HEK293 (cell line): ENCODE measurements at regions of chr11 and their contacts with region 1.

Region 1: GRCh38 chr11:46367244-46367915 is 14.1 kb upstream of the MDK start:
- H3K4me3 ChIP-seq: no peak overlapping the region
- H3K27ac ChIP-seq: no peak overlapping the region
- H3K4me1 ChIP-seq: no peaks in the 10 kb centered on the region
- CTCF ChIP-seq: peak; percentile 67

Region 2: DNA sequence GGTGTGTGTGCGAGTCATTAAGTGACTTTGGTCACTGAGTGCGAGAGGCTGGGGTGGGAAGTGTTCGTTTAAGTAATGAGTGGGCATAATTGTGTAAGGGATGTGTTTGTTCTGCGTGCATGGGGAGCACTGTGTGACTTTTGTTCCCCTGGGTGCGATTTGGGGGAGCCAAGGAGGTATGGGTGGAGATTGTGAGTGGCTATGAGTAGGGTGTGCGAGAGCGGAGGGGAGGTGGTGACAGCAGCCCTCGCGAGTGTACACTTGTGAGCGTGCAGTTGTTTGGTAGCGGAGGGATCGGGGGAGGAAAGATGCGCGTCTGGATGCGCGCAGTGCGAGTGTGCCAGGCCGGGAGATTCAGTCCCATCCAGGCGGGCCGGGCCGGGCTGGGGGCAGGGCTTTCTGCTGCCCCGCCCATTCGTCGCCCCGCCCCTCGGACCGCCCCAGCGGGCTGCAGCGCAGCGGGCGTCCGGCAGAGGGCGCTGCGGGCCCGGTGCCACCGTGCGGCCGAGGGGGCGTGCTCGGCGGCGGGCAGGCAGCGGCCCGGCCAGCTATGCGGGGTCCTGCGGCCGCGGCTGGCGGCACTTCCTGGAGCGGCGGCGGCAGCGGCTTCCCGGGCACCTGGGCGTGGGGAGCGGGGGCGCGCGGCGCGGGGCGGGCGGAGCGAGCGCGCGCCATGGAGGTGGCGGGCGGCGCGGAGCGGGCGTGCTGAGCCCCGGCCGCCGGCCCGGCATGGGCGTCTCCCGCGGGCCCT is 20.3 kb before region 1 on chr11 and contains the start of gene DGKZ:
- CTCF ChIA-PET with region 1: interaction called, 98 read pairs
- POLR2A ChIA-PET with region 1: no interaction called
- H3K4me3 ChIP-seq: peak within 1 kb of the TSS; percentile 85
- H3K27ac ChIP-seq: peak within 1 kb of the TSS; percentile 64; the same call in 1 of the 2 replicates
- H3K4me1 ChIP-seq: no peaks in the 10 kb centered on the region; the same call in 1 of the 2 replicates
- CTCF ChIP-seq: no peak; the same call in 1 of the 2 replicates

Region 3: GRCh38 chr11:46352063-46352841 is 15.1 kb before region 1 on chr11:
- CTCF ChIA-PET with region 1: interaction called, 98 read pairs
- POLR2A ChIA-PET with region 1: no interaction called
- H3K4me3 ChIP-seq: no peak overlapping the region
- H3K27ac ChIP-seq: no peak overlapping the region
- H3K4me1 ChIP-seq: no peaks in the 10 kb centered on the region; the same call in 1 of the 2 replicates
- CTCF ChIP-seq: peak; percentile 70

Region 4: GRCh38 chr11:46601129-46601528 is 233.7 kb after region 1 on chr11:
- CTCF ChIA-PET with region 1: no interaction called
- POLR2A ChIA-PET with region 1: no interaction called
- H3K4me3 ChIP-seq: no peak overlapping the region
- H3K27ac ChIP-seq: no peak overlapping the region
- H3K4me1 ChIP-seq: no peaks in the 10 kb centered on the region
- CTCF ChIP-seq: no peak

Region 5: DNA sequence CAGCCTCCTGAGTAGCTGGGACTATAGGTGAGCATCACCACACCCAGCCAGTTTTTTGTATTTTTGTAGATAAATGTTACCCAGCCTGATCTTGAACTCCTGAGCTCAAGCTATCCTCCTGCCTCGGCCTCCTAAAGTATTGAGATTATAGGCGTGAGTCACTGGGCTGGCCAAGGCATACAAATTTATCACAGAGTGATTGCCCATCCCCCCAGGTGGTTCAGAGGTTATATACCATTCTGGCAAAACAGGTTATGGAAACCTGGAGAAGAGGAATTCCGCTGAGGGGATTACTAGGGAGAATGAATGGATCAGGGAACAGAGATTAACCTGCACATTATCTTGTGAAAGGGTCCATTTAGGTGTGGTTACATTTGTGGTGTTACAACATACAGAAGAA is 258.0 kb after region 1 on chr11:
- CTCF ChIA-PET with region 1: no interaction called
- POLR2A ChIA-PET with region 1: no interaction called
- H3K4me3 ChIP-seq: no peak overlapping the region
- H3K27ac ChIP-seq: no peak overlapping the region
- H3K4me1 ChIP-seq: no peaks in the 10 kb centered on the region
- CTCF ChIP-seq: no peak